Activated CD8-positive, alpha-beta T cell treated with anti-CD3 and anti-CD28 coated beads, Interleukin-2, amount 10 ng/mL, durations not matched to agents 7 days and 5 days (primary cell): ENCODE measurements at regions of chr15 and their contacts with region 1.

Region 1: GRCh38 chr15:34342737-34343575 is at the starts of genes NOP10 and NUTM1:
- DNase-seq: peak; percentile 96
- ATAC-seq: peak; percentile 87
- H3K4me3 Mint-ChIP-seq: no peak within 1 kb of the TSS
- H3K27ac Mint-ChIP-seq: peak within 1 kb of the TSS; percentile 81
- H3K4me1 Mint-ChIP-seq: peaks cover 23% of the 10 kb centered on the region
- H3K27me3 Mint-ChIP-seq: no peaks in the 10 kb centered on the region
- total RNA-seq, gene NOP10: 180 to 182 TPM
- total RNA-seq, gene NUTM1: not detected

Region 2: GRCh38 chr15:34055853-34056595 is 286.9 kb before region 1 on chr15:
- CTCF ChIA-PET with region 1: no interaction called
- POLR2A ChIA-PET with region 1: no interaction called
- DNase-seq: no peak
- ATAC-seq: no peak
- H3K4me3 Mint-ChIP-seq: no peak overlapping the region
- H3K27ac Mint-ChIP-seq: no peak overlapping the region
- H3K4me1 Mint-ChIP-seq: no peaks in the 10 kb centered on the region
- H3K27me3 Mint-ChIP-seq: peaks cover 13% of the 10 kb centered on the region

Region 3: GRCh38 chr15:34241372-34242330 is 101.3 kb before region 1 on chr15:
- CTCF ChIA-PET with region 1: interaction called, 19 read pairs
- POLR2A ChIA-PET with region 1: interaction called, 3 read pairs
- DNase-seq: peak; percentile 61
- ATAC-seq: peak; percentile 79
- H3K4me3 Mint-ChIP-seq: no peak overlapping the region
- H3K27ac Mint-ChIP-seq: no peak overlapping the region
- H3K4me1 Mint-ChIP-seq: peaks cover 18% of the 10 kb centered on the region
- H3K27me3 Mint-ChIP-seq: no peaks in the 10 kb centered on the region

Region 4: DNA sequence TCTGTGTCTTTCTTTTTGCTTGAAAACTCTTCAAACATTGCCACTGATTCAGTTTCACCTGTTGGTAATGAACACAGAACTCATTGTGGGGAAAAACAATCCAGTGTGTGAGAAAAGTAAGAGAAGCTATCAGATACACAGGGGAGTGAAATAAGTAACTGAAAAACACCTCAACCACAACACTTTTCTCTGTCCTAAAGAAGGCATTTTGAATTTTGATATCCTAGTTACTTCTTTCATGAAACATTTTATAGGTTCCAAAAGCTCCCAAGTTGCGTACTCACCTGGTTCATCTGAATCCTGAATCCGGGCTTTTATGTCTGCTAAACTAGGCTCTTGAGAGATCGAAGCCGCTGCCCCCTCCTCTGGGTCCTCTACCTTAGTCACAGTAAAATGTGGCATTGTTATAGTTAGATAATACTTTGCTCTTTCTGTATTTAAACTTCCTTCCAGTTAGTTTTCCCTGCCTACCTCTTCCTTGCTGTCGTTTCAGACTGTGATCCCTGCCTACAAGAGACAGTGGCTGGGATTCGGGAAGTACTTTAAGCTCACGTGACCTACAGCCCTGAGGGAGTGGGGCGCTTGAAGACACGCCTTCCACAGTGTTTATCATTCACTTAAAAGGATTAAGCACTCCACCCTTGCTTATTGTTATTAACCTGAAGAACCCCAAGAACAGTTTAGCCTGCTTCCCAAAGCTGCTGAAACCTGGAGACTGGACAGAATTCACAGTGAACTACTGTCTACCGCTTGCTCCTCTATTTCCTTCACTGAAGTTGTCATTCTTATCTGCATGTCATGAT is 24.5 kb before region 1 on chr15:
- CTCF ChIA-PET with region 1: interaction called, 11 read pairs
- POLR2A ChIA-PET with region 1: interaction called, 29 read pairs
- DNase-seq: peak; percentile 49
- ATAC-seq: peak; percentile 77
- H3K4me3 Mint-ChIP-seq: peak overlapping the region; percentile 81
- H3K27ac Mint-ChIP-seq: peak overlapping the region; percentile 79
- H3K4me1 Mint-ChIP-seq: peaks cover 43% of the 10 kb centered on the region
- H3K27me3 Mint-ChIP-seq: no peaks in the 10 kb centered on the region

Region 5: GRCh38 chr15:34331809-34332208 is 11.1 kb before region 1 on chr15:
- CTCF ChIA-PET with region 1: interaction called, 28 read pairs
- POLR2A ChIA-PET with region 1: interaction called, 61 read pairs
- DNase-seq: peak; percentile 33
- ATAC-seq: peak; percentile 68
- H3K4me3 Mint-ChIP-seq: peak overlapping the region; percentile 38
- H3K27ac Mint-ChIP-seq: peak overlapping the region; percentile 90
- H3K4me1 Mint-ChIP-seq: peaks cover 77% of the 10 kb centered on the region
- H3K27me3 Mint-ChIP-seq: no peaks in the 10 kb centered on the region

Region 6: DNA sequence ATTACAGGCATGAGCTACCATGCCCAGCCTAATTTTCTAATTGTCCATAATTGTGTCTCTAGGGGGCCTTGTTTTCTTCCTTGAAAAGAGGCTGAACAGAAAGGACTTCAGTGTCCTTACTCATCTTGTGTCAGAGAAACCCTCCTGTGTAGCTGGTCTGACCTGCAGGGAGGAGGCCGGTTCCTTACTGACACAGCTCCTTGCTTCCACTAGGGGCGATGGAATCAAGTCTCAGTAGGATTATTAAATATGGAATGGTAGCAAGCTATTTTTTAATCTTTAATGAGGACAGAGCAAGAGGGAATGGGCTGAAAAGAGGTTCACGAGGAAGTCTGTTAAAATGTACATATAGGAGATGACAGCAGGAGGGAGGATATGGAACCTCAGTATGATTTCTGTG is 15.4 kb after region 1 on chr15:
- CTCF ChIA-PET with region 1: interaction called, 26 read pairs
- POLR2A ChIA-PET with region 1: interaction called, 3 read pairs
- DNase-seq: no peak
- ATAC-seq: no peak
- H3K4me3 Mint-ChIP-seq: no peak overlapping the region
- H3K27ac Mint-ChIP-seq: no peak overlapping the region
- H3K4me1 Mint-ChIP-seq: peaks cover 9% of the 10 kb centered on the region
- H3K27me3 Mint-ChIP-seq: no peaks in the 10 kb centered on the region